Transverse colon (tissue), 4 donors: ENCODE measurements at regions of chr4 and their contacts with region 1.

Region 1: DNA sequence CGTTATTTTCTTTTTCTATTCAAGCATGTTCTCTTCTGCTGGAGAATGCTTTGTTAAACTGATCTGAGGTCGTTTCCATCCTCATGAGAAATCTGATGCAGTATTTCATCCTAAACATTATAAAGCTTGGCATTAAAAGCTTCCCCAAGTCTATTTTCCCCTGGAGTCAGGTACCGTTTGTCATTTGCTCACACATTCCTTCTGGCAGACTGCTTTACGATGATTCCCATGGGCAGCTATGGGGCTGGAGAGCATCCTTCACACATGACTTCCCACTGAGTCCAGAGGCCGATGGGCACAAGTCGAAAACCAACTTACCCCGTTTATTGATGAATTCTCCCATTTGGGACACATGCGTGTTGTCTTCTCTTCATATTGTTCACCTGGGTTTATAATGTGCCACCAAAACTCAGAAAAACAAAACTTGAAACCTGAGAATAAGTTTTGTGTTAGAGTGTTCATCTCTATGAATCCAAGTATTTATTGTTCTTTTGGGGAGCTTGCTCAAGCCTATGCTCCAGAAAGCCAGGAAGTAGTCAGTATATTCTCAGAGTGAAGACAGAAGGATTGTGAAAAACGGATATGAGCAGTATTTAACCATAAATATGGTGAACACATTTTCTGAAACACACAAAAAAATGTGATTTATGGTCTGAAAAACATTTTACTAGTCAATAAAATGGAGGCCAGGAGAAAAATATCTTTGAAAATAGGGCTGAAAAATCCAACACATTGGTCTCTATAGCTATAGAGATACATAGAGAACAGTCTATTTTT is 298.8 kb upstream of the NOCT start:
- DNase-seq: no peak
- H3K4me3 ChIP-seq: no peak overlapping the region
- H3K27ac ChIP-seq: no peak overlapping the region
- H3K4me1 ChIP-seq: no peaks in the 10 kb centered on the region
- H3K27me3 ChIP-seq: no peaks in the 10 kb centered on the region
- CTCF ChIP-seq: no peak
- EP300 ChIP-seq: no peak
- POLR2A ChIP-seq: no peak

Region 2: DNA sequence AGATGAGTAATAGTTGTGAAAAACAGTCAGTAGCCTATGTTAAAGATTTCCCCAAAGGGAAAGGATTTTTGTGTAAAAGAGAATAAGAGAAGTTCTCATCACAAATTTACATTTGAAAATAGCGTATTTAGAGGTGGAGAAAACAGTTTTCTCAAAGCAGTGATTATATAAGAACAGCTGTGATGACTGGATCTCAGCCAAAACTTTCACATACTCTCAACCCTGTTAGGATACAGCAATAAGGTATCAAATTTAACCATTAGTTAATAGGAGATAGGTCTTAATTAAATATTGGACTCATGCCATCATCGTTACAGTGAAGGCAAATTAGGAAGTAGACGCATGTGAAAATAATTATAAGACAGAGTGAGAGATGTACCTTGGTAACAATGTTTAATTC is 1807.1 kb before region 1 on chr4:
- in situ Hi-C with region 1: no loop called
- intact Hi-C with region 1: loop called (anchors 5 kb)
- DNase-seq: no peak
- H3K4me3 ChIP-seq: no peak overlapping the region
- H3K27ac ChIP-seq: no peak overlapping the region
- H3K4me1 ChIP-seq: no peaks in the 10 kb centered on the region
- H3K27me3 ChIP-seq: no peaks in the 10 kb centered on the region
- CTCF ChIP-seq: no peak
- EP300 ChIP-seq: no peak
- POLR2A ChIP-seq: no peak

Region 3: DNA sequence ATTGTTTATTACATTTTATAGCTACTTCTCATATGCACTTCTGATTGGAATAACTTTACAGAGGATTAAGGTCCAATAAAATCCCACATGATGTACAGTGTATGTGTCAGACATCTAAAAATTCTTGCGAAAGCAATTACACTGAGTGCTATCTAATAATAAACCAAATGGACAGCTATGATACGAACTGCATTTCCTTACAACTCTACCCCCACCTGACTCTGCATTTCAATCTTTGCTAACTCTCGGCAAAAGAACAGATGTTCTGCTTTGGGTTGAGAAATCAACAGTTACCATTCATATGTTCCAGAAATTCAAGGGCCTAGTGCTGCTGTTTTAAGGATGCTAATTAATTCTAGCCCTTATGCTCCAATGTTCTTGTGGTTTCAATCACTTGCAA is 11.0 kb after region 1 on chr4:
- in situ Hi-C with region 1: no loop called
- intact Hi-C with region 1: loop called (anchors 1 kb)
- DNase-seq: no peak
- H3K4me3 ChIP-seq: no peak overlapping the region
- H3K27ac ChIP-seq: no peak overlapping the region
- H3K4me1 ChIP-seq: no peaks in the 10 kb centered on the region
- H3K27me3 ChIP-seq: no peaks in the 10 kb centered on the region
- CTCF ChIP-seq: no peak
- EP300 ChIP-seq: no peak
- POLR2A ChIP-seq: no peak